ENCODE measurements at regions of chr14 and their contacts with region 1.

Region 1: DNA sequence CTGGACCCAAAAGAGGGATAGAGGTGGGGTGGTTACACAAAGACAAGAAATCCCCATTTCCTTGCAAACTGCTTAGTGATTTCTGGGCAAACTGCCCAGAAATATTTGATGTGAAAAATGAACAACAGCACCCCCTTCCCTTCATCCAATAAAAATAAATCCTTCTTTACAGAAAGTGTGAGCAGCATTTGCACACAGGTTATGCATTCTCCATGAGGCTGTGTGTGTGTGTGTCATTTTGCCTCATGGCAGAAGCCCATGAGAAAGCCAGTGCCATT is 17.2 kb upstream of the NRXN3 start:
- DNase-seq: peak; percentile 68
- H3K4me3 Mint-ChIP-seq: no peak overlapping the region
- H3K27ac Mint-ChIP-seq: no peak overlapping the region
- H3K4me1 Mint-ChIP-seq: peaks cover 10% of the 10 kb centered on the region
- H3K27me3 Mint-ChIP-seq: peaks cover 49% of the 10 kb centered on the region
- CTCF ChIP-seq: peak; percentile 22

Region 2: DNA sequence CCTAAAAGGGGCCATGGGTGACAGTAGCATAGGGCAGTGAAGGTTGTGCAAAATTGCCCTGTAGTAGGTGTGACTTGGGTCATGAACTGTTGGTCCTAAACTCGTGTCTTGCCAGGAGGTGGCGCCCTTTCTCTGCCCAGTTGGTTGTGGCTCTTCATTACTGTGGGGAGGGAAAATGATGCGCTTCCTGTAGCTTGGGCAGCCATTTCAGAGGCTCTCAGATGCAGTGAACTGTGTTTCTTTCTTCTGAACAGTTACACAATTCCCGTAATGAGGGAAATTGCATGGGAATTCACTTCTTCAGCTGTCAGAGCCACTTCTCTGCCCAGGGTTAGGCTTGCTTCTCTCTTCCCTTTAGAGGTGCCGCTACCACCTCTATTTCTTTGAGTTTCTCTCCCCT is 130.9 kb before region 1 on chr14:
- CTCF ChIA-PET with region 1: interaction called, 3 read pairs
- POLR2A ChIA-PET with region 1: no interaction called
- intact Hi-C with region 1: loop called (anchors 2 kb)
- DNase-seq: peak; percentile 80
- H3K4me3 Mint-ChIP-seq: no peak overlapping the region
- H3K27ac Mint-ChIP-seq: no peak overlapping the region
- H3K4me1 Mint-ChIP-seq: no peaks in the 10 kb centered on the region
- H3K27me3 Mint-ChIP-seq: peaks cover 9% of the 10 kb centered on the region
- CTCF ChIP-seq: peak; percentile 73

Region 3: GRCh38 chr14:78135450-78135891 is 17.5 kb before region 1 on chr14:
- CTCF ChIA-PET with region 1: no interaction called
- POLR2A ChIA-PET with region 1: no interaction called
- intact Hi-C with region 1: no loop called
- DNase-seq: peak; percentile 57
- H3K4me3 Mint-ChIP-seq: no peak overlapping the region
- H3K27ac Mint-ChIP-seq: no peak overlapping the region
- H3K4me1 Mint-ChIP-seq: no peaks in the 10 kb centered on the region
- H3K27me3 Mint-ChIP-seq: peaks cover 14% of the 10 kb centered on the region
- CTCF ChIP-seq: no peak

Region 4: GRCh38 chr14:78310272-78310671 is 157.3 kb after region 1 on chr14:
- CTCF ChIA-PET with region 1: no interaction called
- POLR2A ChIA-PET with region 1: no interaction called
- intact Hi-C with region 1: no loop called
- DNase-seq: no peak
- H3K4me3 Mint-ChIP-seq: no peak overlapping the region
- H3K27ac Mint-ChIP-seq: no peak overlapping the region
- H3K4me1 Mint-ChIP-seq: no peaks in the 10 kb centered on the region
- H3K27me3 Mint-ChIP-seq: peaks cover 70% of the 10 kb centered on the region
- CTCF ChIP-seq: no peak

Measured in MCF 10A (cell line).